CD14-positive monocyte (primary cell): ENCODE measurements at regions of chr6 and their contacts with region 1.

Region 1: GRCh38 chr6:137927777-137928218 is 60.7 kb downstream of the TNFAIP3 start:
- DNase-seq: peak; percentile 66 to 91 (median 66)
- H3K4me3 ChIP-seq: peak overlapping the region; percentile 3 to 62 (median 26)
- H3K4me3 Mint-ChIP-seq: peak overlapping the region; percentile 53 to 85
- H3K27ac ChIP-seq: peak overlapping the region; percentile 76 to 87
- H3K27ac Mint-ChIP-seq: peak overlapping the region; percentile 88 to 95 (median 92)
- H3K4me1 ChIP-seq: peaks cover 46% of the 10 kb centered on the region in 2 donors
- H3K4me1 Mint-ChIP-seq: peaks cover 55% of the 10 kb centered on the region
- H3K27me3 ChIP-seq: no peaks in the 10 kb centered on the region
- H3K27me3 Mint-ChIP-seq: peaks cover 0 to 1% (median 0%) of the 10 kb centered on the region in 3 donors
- CTCF ChIP-seq: no peak

Region 2: DNA sequence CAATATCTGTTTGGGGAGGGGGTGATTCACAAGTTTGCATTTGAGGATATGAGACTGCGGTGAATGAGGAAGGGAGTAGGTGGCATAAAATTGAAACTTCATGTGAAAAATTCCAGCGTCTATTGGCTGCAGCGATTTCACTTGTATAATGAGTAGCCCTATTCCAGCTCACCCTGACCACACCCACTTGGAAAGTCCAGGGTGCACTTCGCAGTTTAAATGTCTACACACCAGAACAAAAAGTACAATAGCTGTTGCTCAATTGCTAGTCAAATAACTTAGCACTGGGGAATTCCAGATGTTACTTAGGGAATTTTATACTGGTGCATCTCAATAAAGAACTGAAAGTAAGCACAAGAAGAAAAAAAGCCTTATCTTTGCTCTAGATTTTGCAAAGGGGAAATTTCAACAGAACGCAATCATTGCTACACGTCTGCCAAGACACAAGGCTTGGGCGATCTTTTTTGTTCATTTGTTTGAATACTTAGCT is 54.5 kb before region 1 on chr6:
- intact Hi-C with region 1: loop called in 1 of 2 experiments (anchors 5 kb)
- DNase-seq: peak; percentile 94 to 100 (median 98)
- H3K4me3 ChIP-seq: peak overlapping the region in 2 of 3 experiments; percentile 12 to 87
- H3K4me3 Mint-ChIP-seq: peak overlapping the region; percentile 35 to 76
- H3K27ac ChIP-seq: peak overlapping the region; percentile 63 to 93
- H3K27ac Mint-ChIP-seq: peak overlapping the region; percentile 86 to 97 (median 93)
- H3K4me1 ChIP-seq: peaks cover 76 to 83% of the 10 kb centered on the region in 2 donors
- H3K4me1 Mint-ChIP-seq: peaks cover 81% of the 10 kb centered on the region
- H3K27me3 ChIP-seq: no peaks in the 10 kb centered on the region
- H3K27me3 Mint-ChIP-seq: peaks cover 0 to 2% (median 1%) of the 10 kb centered on the region in 3 donors
- CTCF ChIP-seq: no peak